ENCODE measurements at regions of chr10 and their contacts with region 1.

Region 1: DNA sequence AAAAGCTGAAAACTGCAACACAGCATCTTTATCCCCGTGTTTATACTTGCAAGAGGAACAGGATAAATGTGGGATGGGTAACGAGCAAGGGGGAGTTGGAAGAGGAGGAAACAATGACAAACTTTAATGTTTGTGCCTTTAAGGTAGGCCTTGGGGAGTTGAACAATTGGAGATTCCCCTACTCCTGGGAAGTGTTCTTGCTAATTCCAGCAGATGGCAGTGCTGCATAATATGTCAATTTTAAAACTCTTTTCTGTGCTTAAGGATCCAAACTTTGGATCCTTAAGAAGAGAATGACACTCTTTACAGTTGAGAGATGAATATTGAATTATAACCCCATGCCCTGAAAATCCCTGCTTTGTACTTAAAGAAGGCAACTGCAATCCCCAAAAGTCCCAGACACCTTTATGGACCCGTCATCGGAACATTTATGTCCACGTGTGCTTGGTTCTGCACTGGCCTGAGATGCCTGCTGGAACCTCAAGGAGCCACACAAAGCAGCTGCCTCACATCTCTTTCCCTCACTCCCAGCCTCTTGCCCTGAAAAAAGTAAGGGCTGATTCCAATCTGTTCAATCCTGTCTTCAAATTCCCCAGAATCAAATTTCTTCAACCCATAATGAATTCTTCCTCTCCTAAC is 12.0 kb downstream of the IFIT5 start:
- DNase-seq: no peak
- ATAC-seq: peak; percentile 84

Region 2: DNA sequence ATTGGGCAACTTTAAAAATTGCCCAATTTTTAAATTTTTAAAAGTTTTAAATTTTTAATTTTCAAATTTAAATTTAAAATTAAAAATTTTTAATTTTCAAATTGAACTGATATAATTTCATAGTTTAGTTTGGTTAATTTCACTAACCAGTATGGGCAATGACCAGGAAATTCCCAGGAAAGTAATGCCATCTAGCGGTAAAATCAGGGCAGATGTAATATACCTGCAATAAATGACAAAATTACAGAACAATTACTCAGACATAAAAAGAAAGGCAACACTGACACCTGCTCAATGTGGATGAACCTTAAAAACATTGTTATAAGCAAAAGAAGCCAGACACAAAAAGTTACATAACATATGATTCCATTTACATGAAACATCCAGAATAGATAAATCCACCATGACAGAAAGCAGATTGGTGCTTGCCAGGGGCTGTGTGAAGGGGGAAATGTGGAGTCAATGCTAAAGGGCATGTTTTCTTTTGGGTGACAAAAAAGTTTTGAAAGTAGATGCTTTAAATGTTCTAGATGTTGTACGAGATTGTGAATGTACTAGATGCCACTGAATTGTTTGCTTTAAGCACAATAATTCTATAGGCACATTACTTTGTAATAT is 137.6 kb after region 1 on chr10:
- intact Hi-C with region 1: loop called (anchors 10 kb)
- DNase-seq: no peak
- ATAC-seq: peak; percentile 75

Measured in sciatic nerve (tissue), 2 donors.